CD4-positive, alpha-beta memory T cell (primary cell): ENCODE measurements at regions of chr5 and their contacts with region 1.

Region 1: DNA sequence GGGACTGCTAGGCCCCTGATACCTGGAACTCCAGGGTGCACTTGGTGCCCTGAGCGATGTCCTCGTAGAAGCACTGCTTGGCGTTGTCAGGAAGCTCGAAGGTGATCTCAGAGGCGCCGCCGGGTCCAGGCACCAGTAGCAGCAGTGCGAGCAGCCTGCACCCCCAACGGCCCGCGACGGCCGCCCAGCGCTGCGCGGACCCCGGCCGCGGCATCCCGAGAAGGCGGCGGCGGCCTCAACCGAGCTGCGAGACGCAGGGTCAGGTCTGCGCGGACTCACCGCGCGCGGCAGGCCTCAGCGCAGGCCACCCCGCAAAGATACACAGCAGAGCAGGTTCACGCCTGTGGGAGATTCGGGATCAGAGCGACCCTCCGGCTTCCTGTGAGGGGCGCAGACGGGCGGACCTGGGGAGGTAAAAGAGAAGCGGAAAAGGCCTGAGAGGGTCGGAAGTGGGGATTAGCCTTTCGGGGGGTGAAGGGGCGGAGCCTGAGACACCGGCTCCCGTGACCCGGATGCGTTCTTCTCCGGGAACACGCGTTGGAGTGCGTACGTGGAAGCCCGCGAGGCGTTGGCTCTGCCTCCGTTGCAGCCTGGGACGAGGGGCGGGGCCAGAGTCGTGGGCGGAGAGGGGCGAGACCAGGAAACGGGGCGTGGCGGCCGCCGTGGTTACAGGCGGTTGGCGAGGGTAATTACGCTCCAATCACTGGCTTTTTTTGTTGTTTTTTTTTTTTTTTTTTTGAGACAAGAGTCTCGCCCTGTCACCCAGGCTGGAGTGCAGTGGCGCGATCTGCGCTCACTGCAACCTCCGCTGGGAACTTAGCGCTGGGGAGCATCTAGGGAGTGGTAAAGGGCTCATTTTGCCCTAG is at the start of gene TMED7:
- DNase-seq: peak; percentile 99
- H3K4me3 ChIP-seq: peak within 1 kb of the TSS; percentile 79 to 86
- H3K4me3 Mint-ChIP-seq: peak within 1 kb of the TSS in 2 of 8 donors; percentile 97 to 98
- H3K27ac ChIP-seq: peak within 1 kb of the TSS; percentile 93
- H3K27ac Mint-ChIP-seq: peak within 1 kb of the TSS in 4 of 7 donors; percentile 95 to 98 (median 98)
- H3K4me1 ChIP-seq: peaks cover 42% of the 10 kb centered on the region
- H3K4me1 Mint-ChIP-seq: peaks cover 18 to 19% (median 19%) of the 10 kb centered on the region in 4 donors
- H3K27me3 ChIP-seq: no peaks in the 10 kb centered on the region
- H3K27me3 Mint-ChIP-seq: no peaks in the 10 kb centered on the region
- total RNA-seq, gene TMED7: 47.5 to 49.5 TPM

Region 2: DNA sequence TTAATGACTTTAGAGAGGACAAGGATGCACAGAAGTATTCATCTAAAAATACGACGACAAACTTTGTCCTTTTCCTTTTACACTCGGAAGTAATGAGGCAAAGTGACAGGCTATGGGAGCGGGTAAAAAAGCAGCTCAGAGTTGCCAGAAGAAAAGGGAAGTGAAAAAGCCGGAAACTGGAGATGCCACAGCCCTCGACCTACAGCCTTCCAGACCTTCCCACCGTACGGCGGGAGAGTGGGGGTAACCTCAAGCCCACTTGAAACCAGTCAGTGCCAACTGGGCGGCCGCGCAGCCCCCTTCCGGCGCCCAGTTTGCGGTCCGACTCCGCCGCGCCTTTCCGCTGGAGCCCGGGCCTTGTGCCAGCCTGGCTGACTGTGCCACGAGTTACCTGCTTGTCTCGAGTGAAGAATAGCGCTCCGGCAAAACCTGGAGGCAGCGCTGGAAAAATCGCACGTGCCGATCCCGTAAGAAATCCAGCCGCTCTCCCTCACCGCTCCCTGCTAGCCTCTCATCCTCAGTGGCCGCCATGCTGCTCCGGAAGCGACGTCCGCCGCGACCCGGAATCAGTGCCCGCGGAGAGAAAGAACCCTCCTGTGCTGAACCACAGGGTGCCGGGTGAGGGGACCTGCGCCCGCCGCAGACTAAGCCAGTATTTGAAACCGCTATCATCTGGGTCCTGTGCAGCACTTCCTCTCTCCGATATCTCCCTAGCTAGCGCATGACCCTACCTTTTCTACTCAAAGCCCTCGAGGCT is 363.3 kb before region 1 on chr5 and contains the start of gene PGGT1B:
- CTCF ChIA-PET with region 1: no interaction called
- POLR2A ChIA-PET with region 1: no interaction called
- intact Hi-C with region 1: loop called (anchors 2 kb)
- DNase-seq: peak; percentile 59 to 67 (median 66)
- H3K4me3 ChIP-seq: peak within 1 kb of the TSS; percentile 55 to 80
- H3K4me3 Mint-ChIP-seq: peak within 1 kb of the TSS; percentile 87 to 98 (median 98)
- H3K27ac ChIP-seq: peak within 1 kb of the TSS; percentile 77
- H3K27ac Mint-ChIP-seq: peak within 1 kb of the TSS; percentile 85 to 98 (median 95)
- H3K4me1 ChIP-seq: peaks cover 45% of the 10 kb centered on the region
- H3K4me1 Mint-ChIP-seq: peaks cover 37 to 52% (median 44%) of the 10 kb centered on the region in 4 donors
- H3K27me3 ChIP-seq: no peaks in the 10 kb centered on the region
- H3K27me3 Mint-ChIP-seq: no peaks in the 10 kb centered on the region
- total RNA-seq, gene PGGT1B: 40.6 to 42.4 TPM

Region 3: DNA sequence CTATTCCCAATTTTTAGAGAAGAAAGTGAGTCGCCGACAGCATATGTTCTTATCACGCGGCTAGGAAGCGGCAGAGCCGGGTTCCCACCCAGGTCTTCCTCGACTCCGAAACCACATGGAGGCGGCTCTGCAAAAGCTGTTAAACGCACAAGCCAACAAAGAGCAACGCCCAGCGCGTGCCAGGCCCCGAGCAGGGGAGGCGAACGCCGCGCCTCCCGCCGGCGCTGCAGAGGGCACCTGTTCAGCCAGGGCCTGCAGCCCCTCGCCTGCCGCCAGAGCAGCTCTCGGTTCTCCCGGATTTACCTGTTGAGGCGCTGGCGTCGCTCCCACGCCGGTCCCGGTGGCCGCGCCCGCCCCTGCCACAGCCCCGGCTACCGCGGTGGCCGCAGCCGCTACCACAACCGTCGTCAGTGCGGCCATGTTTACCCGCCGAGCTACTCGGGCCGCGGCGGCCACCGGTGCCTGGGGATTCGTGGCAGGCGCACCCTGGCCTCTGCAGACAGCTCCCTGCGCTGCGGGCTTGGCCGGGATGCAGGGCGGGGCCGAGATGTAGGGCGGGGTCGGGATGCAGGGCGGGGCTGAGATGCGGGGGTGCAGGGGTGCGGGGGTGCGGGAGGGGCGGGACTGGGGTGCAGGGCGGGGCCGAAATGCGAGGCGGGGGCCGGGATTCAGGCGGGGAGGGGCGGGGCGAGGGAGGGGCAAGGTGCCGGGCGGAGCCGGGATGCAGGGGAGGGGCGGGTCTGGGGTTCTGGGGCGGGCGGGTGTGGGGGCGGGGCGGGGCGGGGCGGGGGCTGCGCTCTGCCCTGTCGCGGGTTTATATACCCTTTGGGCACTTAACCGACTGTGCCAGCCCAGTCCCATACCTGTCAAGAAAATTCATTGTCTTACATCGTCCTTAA is 329.4 kb before region 1 on chr5 and contains the start of gene CCDC112:
- CTCF ChIA-PET with region 1: interaction called, 4 read pairs
- POLR2A ChIA-PET with region 1: interaction called, 6 read pairs
- intact Hi-C with region 1: loop called (anchors 1 kb)
- DNase-seq: peak; percentile 61 to 72 (median 64)
- H3K4me3 ChIP-seq: peak within 1 kb of the TSS; percentile 5 to 44
- H3K4me3 Mint-ChIP-seq: peak within 1 kb of the TSS; percentile 83 to 91 (median 89)
- H3K27ac ChIP-seq: no peak within 1 kb of the TSS
- H3K27ac Mint-ChIP-seq: peak within 1 kb of the TSS in 6 of 7 donors; percentile 44 to 83 (median 55)
- H3K4me1 ChIP-seq: peaks cover 13% of the 10 kb centered on the region
- H3K4me1 Mint-ChIP-seq: peaks cover 6 to 17% (median 15%) of the 10 kb centered on the region in 4 donors
- H3K27me3 ChIP-seq: no peaks in the 10 kb centered on the region
- H3K27me3 Mint-ChIP-seq: peaks cover 1 to 2% of the 10 kb centered on the region in 2 donors
- total RNA-seq, gene CCDC112: 5.9 to 6.3 TPM

Region 4: GRCh38 chr5:115601701-115602590 is 23.9 kb before region 1 on chr5 and contains the start of gene TICAM2:
- CTCF ChIA-PET with region 1: interaction called, 4 read pairs
- POLR2A ChIA-PET with region 1: interaction called, 11 read pairs
- intact Hi-C with region 1: loop called (anchors 1 kb)
- DNase-seq: peak; percentile 50 to 73 (median 55)
- H3K4me3 ChIP-seq: peak within 1 kb of the TSS; percentile 31 to 46
- H3K4me3 Mint-ChIP-seq: peak within 1 kb of the TSS; percentile 78 to 91 (median 83)
- H3K27ac ChIP-seq: peak within 1 kb of the TSS; percentile 51
- H3K27ac Mint-ChIP-seq: peak within 1 kb of the TSS; percentile 48 to 96 (median 88)
- H3K4me1 ChIP-seq: no peaks in the 10 kb centered on the region
- H3K4me1 Mint-ChIP-seq: peaks cover 13 to 36% (median 18%) of the 10 kb centered on the region in 4 donors
- H3K27me3 ChIP-seq: no peaks in the 10 kb centered on the region
- H3K27me3 Mint-ChIP-seq: peaks cover 0 to 1% of the 10 kb centered on the region in 2 donors
- total RNA-seq, gene TICAM2: 1.3 to 1.6 TPM

Region 5: GRCh38 chr5:116068028-116068632 is 442.3 kb after region 1 on chr5:
- CTCF ChIA-PET with region 1: interaction called, 13 read pairs
- POLR2A ChIA-PET with region 1: no interaction called
- intact Hi-C with region 1: no loop called
- DNase-seq: peak in 4 of 5 donors; percentile 32 to 46 (median 34)
- H3K4me3 ChIP-seq: no peak overlapping the region
- H3K4me3 Mint-ChIP-seq: no peak overlapping the region
- H3K27ac ChIP-seq: no peak overlapping the region
- H3K27ac Mint-ChIP-seq: no peak overlapping the region
- H3K4me1 ChIP-seq: no peaks in the 10 kb centered on the region
- H3K4me1 Mint-ChIP-seq: no peaks in the 10 kb centered on the region
- H3K27me3 ChIP-seq: peaks cover 13% of the 10 kb centered on the region
- H3K27me3 Mint-ChIP-seq: peaks cover 16 to 22% of the 10 kb centered on the region in 2 donors

Region 6: DNA sequence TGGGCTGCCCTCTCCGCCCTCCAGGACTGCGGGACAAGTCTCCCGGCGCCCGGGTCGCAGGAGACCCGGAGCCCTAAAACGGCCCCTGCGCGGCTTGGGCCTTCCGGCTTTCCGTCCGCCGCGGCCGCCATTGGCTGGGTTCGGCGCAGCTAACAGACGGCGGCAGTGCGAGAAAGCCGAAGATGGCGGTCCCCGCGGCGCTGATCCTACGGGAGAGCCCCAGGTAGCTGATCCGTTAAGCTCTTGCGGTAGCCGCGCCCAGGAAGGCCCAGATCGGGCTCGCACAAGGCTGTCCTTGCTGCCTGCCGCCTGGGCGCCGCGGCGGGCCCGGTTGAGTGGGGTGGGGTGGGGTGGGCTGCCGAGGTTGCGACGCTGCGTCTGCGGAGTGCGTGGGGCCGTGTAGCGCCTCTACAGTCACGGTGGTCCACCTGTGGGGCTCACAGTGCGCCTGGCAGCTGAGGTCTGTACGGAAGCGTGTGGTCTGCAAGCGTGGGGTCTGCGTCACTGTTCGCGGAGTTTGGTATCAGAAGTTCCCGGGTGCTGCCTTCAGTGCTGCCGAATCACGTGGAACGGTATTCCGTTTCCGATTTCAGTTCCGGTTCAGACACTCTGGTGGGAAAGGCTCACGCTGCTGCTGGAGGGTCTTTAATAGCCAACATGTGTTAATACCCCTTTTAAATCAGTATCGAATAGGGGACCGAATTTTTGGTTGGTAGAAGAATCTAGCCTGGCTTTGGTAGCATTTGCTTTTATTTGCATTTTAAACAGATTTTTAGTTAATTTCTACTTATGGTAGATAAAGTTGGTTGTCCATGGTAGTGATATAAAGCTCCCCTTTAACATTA is 459.3 kb after region 1 on chr5 and contains the start of gene COMMD10:
- CTCF ChIA-PET with region 1: interaction called, 6 read pairs
- POLR2A ChIA-PET with region 1: interaction called, 7 read pairs
- intact Hi-C with region 1: loop called (anchors 1 kb)
- DNase-seq: peak; percentile 79 to 88 (median 83)
- H3K4me3 ChIP-seq: peak within 1 kb of the TSS; percentile 76 to 96
- H3K4me3 Mint-ChIP-seq: peak within 1 kb of the TSS; percentile 92 to 96 (median 96)
- H3K27ac ChIP-seq: peak within 1 kb of the TSS; percentile 78
- H3K27ac Mint-ChIP-seq: peak within 1 kb of the TSS; percentile 92 to 99 (median 98)
- H3K4me1 ChIP-seq: peaks cover 33% of the 10 kb centered on the region
- H3K4me1 Mint-ChIP-seq: peaks cover 31 to 65% (median 43%) of the 10 kb centered on the region in 4 donors
- H3K27me3 ChIP-seq: no peaks in the 10 kb centered on the region
- H3K27me3 Mint-ChIP-seq: no peaks in the 10 kb centered on the region
- total RNA-seq, gene COMMD10: 31.4 to 32.0 TPM